Activated CD4-positive, alpha-beta T cell treated with anti-CD3 and anti-CD28 coated beads, Interleukin-2, amount 10 ng/mL, durations not matched to agents 24 days and 14 days (primary cell): ENCODE measurements at regions of chr13 and their contacts with region 1.

Region 1: GRCh38 chr13:50893211-50893852 is 16.3 kb upstream of the RNASEH2B start:
- DNase-seq: peak; percentile 84
- H3K4me3 Mint-ChIP-seq: peak overlapping the region; percentile 63
- H3K27ac Mint-ChIP-seq: peak overlapping the region; percentile 86
- H3K4me1 Mint-ChIP-seq: peaks cover 54% of the 10 kb centered on the region
- H3K27me3 Mint-ChIP-seq: no peaks in the 10 kb centered on the region

Region 2: DNA sequence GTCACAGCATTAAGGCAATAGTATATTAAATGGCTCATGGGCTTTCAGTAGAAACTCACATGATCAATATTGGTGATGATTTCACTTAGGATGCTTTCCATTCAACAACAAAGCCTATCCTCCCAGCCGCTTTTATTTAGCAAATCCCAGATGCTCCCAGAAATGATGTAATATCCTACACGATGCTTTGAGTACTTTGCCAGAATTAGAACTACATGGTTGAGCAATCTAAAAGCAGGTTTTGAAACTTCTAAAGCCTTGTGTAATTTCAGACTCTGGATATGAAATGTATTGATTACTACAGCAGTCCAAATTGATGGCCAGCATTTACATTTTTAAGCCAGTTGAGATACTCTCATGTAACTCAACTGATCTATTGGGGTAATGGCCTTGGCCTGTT is 63.4 kb before region 1 on chr13:
- intact Hi-C with region 1: loop called (anchors 5 kb)
- DNase-seq: no peak
- H3K4me3 Mint-ChIP-seq: no peak overlapping the region
- H3K27ac Mint-ChIP-seq: no peak overlapping the region
- H3K4me1 Mint-ChIP-seq: peaks cover 13% of the 10 kb centered on the region
- H3K27me3 Mint-ChIP-seq: peaks cover 15% of the 10 kb centered on the region

Region 3: GRCh38 chr13:51112771-51113170 is 219.4 kb after region 1 on chr13:
- intact Hi-C with region 1: no loop called
- DNase-seq: no peak
- H3K4me3 Mint-ChIP-seq: no peak overlapping the region
- H3K27ac Mint-ChIP-seq: no peak overlapping the region
- H3K4me1 Mint-ChIP-seq: peaks cover 6% of the 10 kb centered on the region
- H3K27me3 Mint-ChIP-seq: peaks cover 5% of the 10 kb centered on the region